ENCODE measurements at regions of chr3 and their contacts with region 1.

Region 1: DNA sequence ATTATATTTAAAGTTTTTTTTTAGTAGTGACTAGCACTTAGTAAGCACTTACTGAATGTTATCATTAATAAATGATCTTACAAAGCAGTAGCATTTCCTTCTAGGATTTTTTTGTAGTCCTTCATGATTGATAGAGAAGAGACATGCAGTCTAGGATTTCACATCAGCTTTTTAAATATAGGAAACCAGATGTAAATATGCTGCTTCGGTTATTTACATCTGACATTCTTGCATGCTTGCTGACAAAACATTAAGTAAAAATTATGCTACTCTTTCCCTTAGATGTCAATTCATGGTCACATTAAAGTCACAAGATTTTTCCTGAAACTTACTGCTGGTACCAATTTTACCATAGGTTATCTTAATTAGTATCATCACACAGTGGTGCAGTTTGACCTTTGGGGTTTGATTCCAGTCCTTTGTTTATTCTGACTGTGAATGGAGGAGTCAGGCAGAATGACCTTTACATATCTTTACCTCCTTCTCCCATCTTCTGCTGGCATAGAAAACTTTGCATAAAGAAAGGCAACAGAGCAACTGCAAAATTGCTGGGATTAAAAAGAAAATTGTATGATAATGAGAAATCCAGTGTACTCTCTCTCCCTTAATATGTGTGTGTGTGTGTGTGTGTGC is 286.5 kb downstream of the LPP start:
- DNase-seq: no peak
- H3K4me3 ChIP-seq: no peak overlapping the region
- CTCF ChIP-seq: no peak
- POLR2A ChIP-seq: no peak

Region 2: DNA sequence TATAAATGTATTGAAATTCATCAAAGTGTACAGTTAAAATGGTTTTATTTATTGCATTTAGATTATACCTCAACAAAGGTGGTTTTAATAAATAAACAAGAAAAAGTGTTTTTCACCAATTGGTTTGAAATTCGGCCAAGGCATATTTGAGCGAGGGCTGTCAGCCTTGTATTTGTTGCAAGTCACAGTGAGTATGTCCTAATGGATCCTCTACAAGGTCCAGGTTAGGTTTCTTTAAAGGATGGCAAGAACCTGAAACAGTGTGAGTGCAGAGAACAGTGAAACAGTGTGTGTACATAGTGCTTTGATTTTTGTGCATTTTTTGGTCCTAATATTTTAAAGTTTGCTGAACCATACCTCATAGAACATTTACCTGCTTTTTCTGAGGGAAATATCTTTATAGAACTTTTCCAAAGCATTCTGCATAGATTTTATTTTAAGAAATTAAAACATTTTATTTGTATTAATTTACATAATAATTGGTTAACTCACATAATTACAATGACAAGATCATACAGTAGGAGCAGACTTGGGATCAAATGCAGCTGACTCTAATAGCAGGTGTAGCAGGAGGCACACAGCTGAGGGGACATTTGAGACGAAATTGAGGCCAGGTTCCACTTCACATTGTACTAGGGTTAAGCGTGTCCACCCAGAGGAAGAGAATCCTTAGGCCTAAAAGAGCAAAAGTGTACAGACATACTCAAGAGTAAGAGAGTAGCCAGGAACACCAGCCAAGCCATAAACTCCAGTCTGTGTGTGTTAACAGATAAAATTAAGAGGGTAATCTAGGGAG is 302.5 kb after region 1 on chr3:
- intact Hi-C with region 1: loop called (anchors 5 kb)
- DNase-seq: no peak
- H3K4me3 ChIP-seq: no peak overlapping the region
- CTCF ChIP-seq: no peak
- POLR2A ChIP-seq: no peak